ENCODE measurements at regions of chr6 and their contacts with region 1.

Region 1: GRCh38 chr6:134111062-134111677 is 58.7 kb upstream of the SLC2A12 start:
- DNase-seq: peak in 8 of 9 donors; percentile 30 to 69 (median 53)
- ATAC-seq: peak; percentile 84
- H3K4me3 ChIP-seq: no peak overlapping the region
- H3K4me3 Mint-ChIP-seq: no peak overlapping the region
- H3K27ac ChIP-seq: no peak overlapping the region
- H3K27ac Mint-ChIP-seq: peak overlapping the region in 1 of 9 donors; percentile 15
- H3K4me1 ChIP-seq: no peaks in the 10 kb centered on the region
- H3K4me1 Mint-ChIP-seq: peaks cover 0 to 6% (median 0%) of the 10 kb centered on the region in 7 donors
- H3K27me3 ChIP-seq: no peaks in the 10 kb centered on the region
- H3K27me3 Mint-ChIP-seq: peaks cover 5 to 21% (median 11%) of the 10 kb centered on the region in 5 donors

Region 2: GRCh38 chr6:133254552-133255228 is 856.5 kb before region 1 on chr6:
- CTCF ChIA-PET with region 1: no interaction called
- POLR2A ChIA-PET with region 1: no interaction called
- intact Hi-C with region 1: no loop called
- DNase-seq: no peak
- ATAC-seq: no peak
- H3K4me3 ChIP-seq: no peak overlapping the region
- H3K4me3 Mint-ChIP-seq: no peak overlapping the region
- H3K27ac ChIP-seq: no peak overlapping the region
- H3K27ac Mint-ChIP-seq: no peak overlapping the region
- H3K4me1 ChIP-seq: no peaks in the 10 kb centered on the region
- H3K4me1 Mint-ChIP-seq: no peaks in the 10 kb centered on the region
- H3K27me3 ChIP-seq: no peaks in the 10 kb centered on the region
- H3K27me3 Mint-ChIP-seq: peaks cover 0 to 24% (median 11%) of the 10 kb centered on the region in 5 donors

Region 3: DNA sequence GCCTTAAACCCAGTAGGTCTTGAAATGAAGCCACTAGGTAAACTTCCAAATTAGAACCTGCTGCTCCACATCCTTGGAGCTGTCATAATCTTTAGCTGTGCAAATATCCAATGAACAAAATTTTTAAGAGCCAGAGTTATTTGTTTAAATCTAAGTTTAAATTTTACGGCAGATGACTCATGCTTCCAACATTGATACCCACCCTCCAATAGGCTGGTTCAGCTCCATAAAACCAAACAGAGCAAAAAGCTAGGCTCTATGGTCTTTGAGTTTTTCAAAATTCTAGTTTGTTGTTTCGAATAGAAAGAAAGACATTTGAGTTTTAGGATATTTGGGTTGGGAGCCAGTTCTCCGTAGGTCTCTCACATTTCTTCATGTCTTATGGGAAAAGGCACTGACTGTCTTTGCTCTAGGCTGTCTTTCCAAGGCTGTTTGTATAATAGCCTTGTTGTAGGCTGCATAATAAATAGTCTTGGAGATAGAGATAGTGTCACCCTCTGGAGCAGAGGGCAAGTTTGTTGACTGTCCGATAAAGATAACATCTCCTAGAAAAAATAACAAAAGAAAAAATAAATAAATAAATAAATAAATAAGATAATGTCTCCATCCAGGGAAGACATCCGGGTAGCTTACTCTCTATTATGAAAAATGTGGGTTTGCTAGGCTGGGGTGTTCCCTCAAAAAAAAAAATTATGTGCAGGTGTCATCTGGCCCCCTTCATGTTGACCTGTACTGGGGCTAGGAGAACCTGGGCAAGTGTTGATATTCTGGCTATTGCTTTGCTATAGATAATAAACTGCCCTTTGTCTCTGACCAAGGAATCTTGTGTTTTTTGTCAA is 95.2 kb before region 1 on chr6:
- CTCF ChIA-PET with region 1: no interaction called
- POLR2A ChIA-PET with region 1: no interaction called
- intact Hi-C with region 1: no loop called
- DNase-seq: no peak
- ATAC-seq: no peak
- H3K4me3 ChIP-seq: no peak overlapping the region
- H3K4me3 Mint-ChIP-seq: no peak overlapping the region
- H3K27ac ChIP-seq: no peak overlapping the region
- H3K27ac Mint-ChIP-seq: no peak overlapping the region
- H3K4me1 ChIP-seq: no peaks in the 10 kb centered on the region
- H3K4me1 Mint-ChIP-seq: no peaks in the 10 kb centered on the region
- H3K27me3 ChIP-seq: no peaks in the 10 kb centered on the region
- H3K27me3 Mint-ChIP-seq: peaks cover 0 to 16% (median 8%) of the 10 kb centered on the region in 5 donors

Region 4: DNA sequence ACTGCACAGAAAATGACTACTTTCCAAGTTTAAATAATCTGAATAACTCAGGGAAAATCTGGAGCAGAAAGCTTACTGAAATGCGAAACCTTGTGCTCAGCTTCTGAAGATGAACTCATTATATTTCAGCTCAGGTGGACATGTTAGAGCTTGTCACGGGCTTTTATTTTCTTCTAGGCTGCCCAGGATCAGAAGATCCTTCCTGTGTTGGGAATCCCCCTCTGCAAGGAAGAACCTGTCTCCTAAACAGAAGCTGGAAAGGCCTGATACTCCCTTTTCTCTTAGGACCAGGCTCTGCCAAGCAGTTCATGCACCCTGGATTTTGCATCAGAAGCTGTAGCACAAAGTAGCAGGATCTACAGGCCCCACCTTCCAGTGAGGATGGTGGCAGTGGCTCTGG is 53.7 kb before region 1 on chr6:
- CTCF ChIA-PET with region 1: no interaction called
- POLR2A ChIA-PET with region 1: no interaction called
- intact Hi-C with region 1: no loop called
- DNase-seq: no peak
- ATAC-seq: no peak
- H3K4me3 ChIP-seq: no peak overlapping the region
- H3K4me3 Mint-ChIP-seq: no peak overlapping the region
- H3K27ac ChIP-seq: no peak overlapping the region
- H3K27ac Mint-ChIP-seq: no peak overlapping the region
- H3K4me1 ChIP-seq: no peaks in the 10 kb centered on the region
- H3K4me1 Mint-ChIP-seq: peaks cover 3 to 5% (median 3%) of the 10 kb centered on the region in 7 donors
- H3K27me3 ChIP-seq: peaks cover 0 to 2% of the 10 kb centered on the region in 2 donors
- H3K27me3 Mint-ChIP-seq: peaks cover 0 to 16% (median 11%) of the 10 kb centered on the region in 5 donors

Region 5: GRCh38 chr6:134882426-134883038 is 771.4 kb after region 1 on chr6:
- CTCF ChIA-PET with region 1: no interaction called
- POLR2A ChIA-PET with region 1: no interaction called
- intact Hi-C with region 1: loop called (anchors 1 kb)
- DNase-seq: peak in 7 of 9 donors; percentile 14 to 57 (median 41)
- ATAC-seq: no peak
- H3K4me3 ChIP-seq: no peak overlapping the region
- H3K4me3 Mint-ChIP-seq: no peak overlapping the region
- H3K27ac ChIP-seq: no peak overlapping the region
- H3K27ac Mint-ChIP-seq: no peak overlapping the region
- H3K4me1 ChIP-seq: no peaks in the 10 kb centered on the region
- H3K4me1 Mint-ChIP-seq: peaks cover 0 to 5% (median 0%) of the 10 kb centered on the region in 7 donors
- H3K27me3 ChIP-seq: no peaks in the 10 kb centered on the region
- H3K27me3 Mint-ChIP-seq: peaks cover 4 to 32% (median 11%) of the 10 kb centered on the region in 5 donors

Region 6: GRCh38 chr6:134938896-134939295 is 827.7 kb after region 1 on chr6:
- CTCF ChIA-PET with region 1: interaction called, 12 read pairs
- POLR2A ChIA-PET with region 1: no interaction called
- intact Hi-C with region 1: loop called (anchors 1 kb)
- DNase-seq: peak in 6 of 9 donors; percentile 27 to 84 (median 34)
- ATAC-seq: peak; percentile 91
- H3K4me3 ChIP-seq: no peak overlapping the region
- H3K4me3 Mint-ChIP-seq: peak overlapping the region in 2 of 10 donors; percentile 25 to 28
- H3K27ac ChIP-seq: no peak overlapping the region
- H3K27ac Mint-ChIP-seq: peak overlapping the region in 3 of 9 donors; percentile 36 to 83 (median 55)
- H3K4me1 ChIP-seq: peaks cover 0 to 6% of the 10 kb centered on the region in 2 donors
- H3K4me1 Mint-ChIP-seq: peaks cover 0 to 15% (median 10%) of the 10 kb centered on the region in 7 donors
- H3K27me3 ChIP-seq: no peaks in the 10 kb centered on the region
- H3K27me3 Mint-ChIP-seq: no peaks in the 10 kb centered on the region

Region 7: DNA sequence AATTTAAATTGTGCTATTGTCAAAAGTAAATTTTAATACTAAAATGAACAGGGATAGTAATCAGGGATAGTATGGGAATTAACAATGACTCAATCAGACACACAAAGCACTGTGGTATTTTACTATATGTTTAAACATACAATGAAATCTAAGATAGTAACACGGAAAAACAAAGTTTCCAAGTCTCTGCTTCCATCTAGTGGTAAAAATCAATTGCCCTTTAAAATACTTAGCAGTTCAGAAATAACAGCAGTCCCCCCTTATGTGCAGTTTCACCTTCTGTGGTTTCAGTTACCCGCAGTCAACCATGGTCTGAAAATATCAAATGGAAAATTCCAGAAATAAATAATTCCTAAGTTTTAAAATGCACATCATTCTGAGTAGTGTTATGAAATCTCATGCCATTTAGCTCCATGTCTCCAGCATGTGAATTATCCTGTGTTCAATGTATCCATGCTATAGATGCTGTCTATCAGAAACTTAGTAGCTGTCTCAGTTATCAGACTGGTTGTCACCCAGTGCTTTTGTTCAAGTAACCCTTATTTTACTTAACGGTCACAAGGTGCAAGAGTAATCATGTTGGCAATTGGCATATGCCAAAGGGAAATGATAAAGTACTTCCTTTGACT is 1327.9 kb after region 1 on chr6:
- CTCF ChIA-PET with region 1: interaction called, 4 read pairs
- POLR2A ChIA-PET with region 1: no interaction called
- intact Hi-C with region 1: loop called in 1 of 2 experiments (anchors 2 kb)
- DNase-seq: peak in 6 of 9 donors; percentile 23 to 39 (median 27)
- ATAC-seq: peak; percentile 72
- H3K4me3 ChIP-seq: no peak overlapping the region
- H3K4me3 Mint-ChIP-seq: peak overlapping the region in 8 of 10 donors; percentile 15 to 85 (median 72)
- H3K27ac ChIP-seq: no peak overlapping the region
- H3K27ac Mint-ChIP-seq: peak overlapping the region in 7 of 9 donors; percentile 7 to 87 (median 60)
- H3K4me1 ChIP-seq: peaks cover 0 to 8% of the 10 kb centered on the region in 2 donors
- H3K4me1 Mint-ChIP-seq: peaks cover 12 to 27% (median 20%) of the 10 kb centered on the region in 7 donors
- H3K27me3 ChIP-seq: no peaks in the 10 kb centered on the region
- H3K27me3 Mint-ChIP-seq: no peaks in the 10 kb centered on the region

Region 8: GRCh38 chr6:135497412-135498269 is 1386.5 kb after region 1 on chr6 and contains the start of gene AHI1:
- CTCF ChIA-PET with region 1: no interaction called
- POLR2A ChIA-PET with region 1: no interaction called
- intact Hi-C with region 1: no loop called
- DNase-seq: peak; percentile 65 to 94 (median 85)
- ATAC-seq: peak; percentile 89
- H3K4me3 ChIP-seq: peak within 1 kb of the TSS; percentile 64
- H3K4me3 Mint-ChIP-seq: peak within 1 kb of the TSS in 4 of 10 donors; percentile 32 to 53 (median 37)
- H3K27ac ChIP-seq: peak within 1 kb of the TSS; percentile 95
- H3K27ac Mint-ChIP-seq: no peak within 1 kb of the TSS
- H3K4me1 ChIP-seq: peaks cover 0 to 5% of the 10 kb centered on the region in 2 donors
- H3K4me1 Mint-ChIP-seq: peaks cover 4 to 19% (median 9%) of the 10 kb centered on the region in 7 donors
- H3K27me3 ChIP-seq: no peaks in the 10 kb centered on the region
- H3K27me3 Mint-ChIP-seq: peaks cover 0 to 3% (median 0%) of the 10 kb centered on the region in 5 donors
- total RNA-seq, gene AHI1: 12.5 to 31.3 (median 26.3) TPM